ENCODE measurements at regions of chr1 and their contacts with region 1.

Region 1: GRCh38 chr1:15820478-15820877 is 13.0 kb upstream of the UQCRHL start:
- DNase-seq: no peak
- H3K4me3 ChIP-seq: no peak overlapping the region
- H3K4me3 Mint-ChIP-seq: no peak overlapping the region
- H3K27ac ChIP-seq: no peak overlapping the region
- H3K27ac Mint-ChIP-seq: peak overlapping the region in 1 of 7 donors; percentile 37
- H3K4me1 ChIP-seq: peaks cover 8% of the 10 kb centered on the region
- H3K4me1 Mint-ChIP-seq: peaks cover 3 to 5% (median 4%) of the 10 kb centered on the region in 4 donors
- H3K27me3 ChIP-seq: no peaks in the 10 kb centered on the region
- H3K27me3 Mint-ChIP-seq: peaks cover 0 to 3% of the 10 kb centered on the region in 2 donors

Region 2: GRCh38 chr1:15684468-15685291 is 135.8 kb before region 1 on chr1:
- CTCF ChIA-PET with region 1: no interaction called
- POLR2A ChIA-PET with region 1: no interaction called
- intact Hi-C with region 1: no loop called
- DNase-seq: peak; percentile 18 to 60 (median 40)
- H3K4me3 ChIP-seq: peak overlapping the region; percentile 58 to 66
- H3K4me3 Mint-ChIP-seq: peak overlapping the region; percentile 93 to 95 (median 94)
- H3K27ac ChIP-seq: peak overlapping the region; percentile 73
- H3K27ac Mint-ChIP-seq: peak overlapping the region; percentile 94 to 98 (median 94)
- H3K4me1 ChIP-seq: peaks cover 25% of the 10 kb centered on the region
- H3K4me1 Mint-ChIP-seq: peaks cover 20 to 34% (median 28%) of the 10 kb centered on the region in 4 donors
- H3K27me3 ChIP-seq: no peaks in the 10 kb centered on the region
- H3K27me3 Mint-ChIP-seq: no peaks in the 10 kb centered on the region

Region 3: GRCh38 chr1:15847100-15847892 is 26.8 kb after region 1 on chr1 and contains the start of gene SPEN:
- CTCF ChIA-PET with region 1: interaction called, 14 read pairs
- POLR2A ChIA-PET with region 1: interaction called, 15 read pairs
- intact Hi-C with region 1: loop called (anchors 1 kb)
- DNase-seq: peak; percentile 98 to 99 (median 99)
- H3K4me3 ChIP-seq: peak within 1 kb of the TSS; percentile 62 to 65
- H3K4me3 Mint-ChIP-seq: peak within 1 kb of the TSS; percentile 95 to 99 (median 98)
- H3K27ac ChIP-seq: peak within 1 kb of the TSS; percentile 86
- H3K27ac Mint-ChIP-seq: peak within 1 kb of the TSS; percentile 97 to 99 (median 98)
- H3K4me1 ChIP-seq: peaks cover 52% of the 10 kb centered on the region
- H3K4me1 Mint-ChIP-seq: peaks cover 23 to 60% (median 35%) of the 10 kb centered on the region in 4 donors
- H3K27me3 ChIP-seq: no peaks in the 10 kb centered on the region
- H3K27me3 Mint-ChIP-seq: no peaks in the 10 kb centered on the region
- total RNA-seq, gene SPEN: 80.8 to 87.8 TPM

Region 4: DNA sequence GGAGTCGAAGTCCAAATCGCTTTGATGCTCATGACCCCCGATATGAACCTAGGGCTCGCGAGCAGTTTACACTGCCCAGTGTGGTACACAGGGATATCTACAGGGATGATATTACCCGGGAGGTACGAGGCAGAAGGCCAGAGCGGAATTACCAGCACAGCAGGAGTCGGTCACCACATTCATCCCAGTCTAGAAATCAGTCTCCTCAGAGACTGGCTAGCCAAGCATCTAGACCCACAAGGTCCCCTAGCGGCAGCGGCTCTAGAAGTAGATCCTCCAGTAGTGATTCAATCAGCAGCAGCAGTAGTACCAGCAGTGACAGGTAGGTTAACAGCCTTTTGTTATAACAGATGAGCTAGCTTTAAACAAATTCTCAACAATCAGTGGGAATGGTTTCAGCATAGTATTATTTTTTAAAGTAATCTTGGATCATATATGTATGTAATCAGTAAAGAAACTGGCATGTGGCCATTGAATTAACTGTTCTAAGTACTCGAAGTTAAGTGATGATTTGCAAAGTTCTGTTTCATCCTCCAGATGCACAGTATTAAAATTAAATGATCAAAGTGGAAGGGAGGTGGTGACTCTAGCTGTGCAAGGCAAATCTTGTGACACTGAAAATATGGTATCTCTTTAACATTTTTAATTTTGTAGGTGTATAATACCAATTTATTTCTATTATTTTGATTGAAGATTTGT is 56.0 kb after region 1 on chr1:
- CTCF ChIA-PET with region 1: interaction called, 14 read pairs
- POLR2A ChIA-PET with region 1: interaction called, 3 read pairs
- intact Hi-C with region 1: no loop called
- DNase-seq: peak in 1 of 5 donors; percentile 7
- H3K4me3 ChIP-seq: no peak overlapping the region
- H3K4me3 Mint-ChIP-seq: no peak overlapping the region
- H3K27ac ChIP-seq: no peak overlapping the region
- H3K27ac Mint-ChIP-seq: peak overlapping the region in 5 of 7 donors; percentile 22 to 74 (median 46)
- H3K4me1 ChIP-seq: peaks cover 10% of the 10 kb centered on the region
- H3K4me1 Mint-ChIP-seq: peaks cover 35 to 62% (median 45%) of the 10 kb centered on the region in 4 donors
- H3K27me3 ChIP-seq: no peaks in the 10 kb centered on the region
- H3K27me3 Mint-ChIP-seq: no peaks in the 10 kb centered on the region

Region 5: GRCh38 chr1:15918962-15919715 is 98.7 kb after region 1 on chr1:
- CTCF ChIA-PET with region 1: interaction called, 10 read pairs
- POLR2A ChIA-PET with region 1: no interaction called
- intact Hi-C with region 1: loop called (anchors 5 kb)
- DNase-seq: peak in 4 of 5 donors; percentile 17 to 79 (median 26)
- H3K4me3 ChIP-seq: no peak overlapping the region
- H3K4me3 Mint-ChIP-seq: peak overlapping the region in 7 of 8 donors; percentile 0 to 52 (median 12)
- H3K27ac ChIP-seq: no peak overlapping the region
- H3K27ac Mint-ChIP-seq: peak overlapping the region; percentile 23 to 84 (median 58)
- H3K4me1 ChIP-seq: peaks cover 29% of the 10 kb centered on the region
- H3K4me1 Mint-ChIP-seq: peaks cover 16 to 45% (median 33%) of the 10 kb centered on the region in 4 donors
- H3K27me3 ChIP-seq: no peaks in the 10 kb centered on the region
- H3K27me3 Mint-ChIP-seq: no peaks in the 10 kb centered on the region

Region 6: DNA sequence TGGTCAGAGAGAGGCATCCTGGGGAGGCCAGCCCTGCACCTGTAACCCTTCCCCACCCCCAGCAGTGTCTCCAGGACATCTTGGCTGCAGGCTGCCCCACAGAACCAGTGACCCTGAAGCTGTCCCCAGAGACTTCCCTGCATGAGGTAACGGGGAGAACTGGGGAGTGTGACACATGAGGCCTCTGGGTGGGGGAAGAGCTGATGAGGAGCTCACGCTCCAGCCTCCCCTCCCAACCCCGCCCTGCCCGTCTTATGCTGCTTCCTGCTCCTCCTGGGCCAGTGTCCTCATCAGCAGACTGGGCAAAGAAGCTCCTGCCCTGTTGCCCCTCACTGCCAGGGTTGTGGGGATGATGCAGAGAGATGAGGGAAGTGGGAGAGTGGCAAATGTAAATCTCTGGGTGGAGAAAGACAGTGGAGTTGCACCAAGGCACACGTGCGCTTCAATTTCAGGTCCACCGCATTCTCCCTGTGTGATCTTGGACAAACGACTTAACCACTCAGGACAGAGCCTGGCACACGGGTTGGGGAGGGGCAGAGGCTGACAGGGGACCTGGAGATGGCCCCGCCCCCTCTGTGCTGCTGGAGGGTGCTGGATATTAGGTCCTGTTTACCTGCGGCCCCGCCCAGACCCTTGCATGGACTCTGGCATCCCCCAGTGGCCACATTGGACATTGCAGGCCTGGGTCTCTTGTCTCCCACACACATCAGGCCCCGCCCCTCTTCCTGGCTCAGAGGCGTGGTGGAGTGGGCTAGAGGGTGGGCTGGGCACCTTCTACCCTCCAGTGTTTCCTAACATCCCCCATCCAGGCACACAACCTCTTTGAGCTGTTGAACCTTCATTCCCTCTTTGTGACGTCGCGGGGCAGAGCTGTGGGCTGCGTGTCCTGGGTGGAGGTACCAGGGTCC is 235.4 kb after region 1 on chr1:
- CTCF ChIA-PET with region 1: interaction called, 16 read pairs
- POLR2A ChIA-PET with region 1: no interaction called
- intact Hi-C with region 1: no loop called
- DNase-seq: peak; percentile 69 to 85 (median 78)
- H3K4me3 ChIP-seq: no peak overlapping the region
- H3K4me3 Mint-ChIP-seq: peak overlapping the region in 2 of 8 donors; percentile 11 to 43
- H3K27ac ChIP-seq: no peak overlapping the region
- H3K27ac Mint-ChIP-seq: peak overlapping the region in 2 of 7 donors; percentile 52 to 57
- H3K4me1 ChIP-seq: peaks cover 3% of the 10 kb centered on the region
- H3K4me1 Mint-ChIP-seq: peaks cover 4 to 7% (median 6%) of the 10 kb centered on the region in 4 donors
- H3K27me3 ChIP-seq: no peaks in the 10 kb centered on the region
- H3K27me3 Mint-ChIP-seq: peaks cover 2 to 5% of the 10 kb centered on the region in 2 donors

Region 7: GRCh38 chr1:16066245-16066644 is 245.8 kb after region 1 on chr1:
- CTCF ChIA-PET with region 1: no interaction called
- POLR2A ChIA-PET with region 1: no interaction called
- intact Hi-C with region 1: no loop called
- DNase-seq: no peak
- H3K4me3 ChIP-seq: no peak overlapping the region
- H3K4me3 Mint-ChIP-seq: no peak overlapping the region
- H3K27ac ChIP-seq: no peak overlapping the region
- H3K27ac Mint-ChIP-seq: no peak overlapping the region
- H3K4me1 ChIP-seq: peaks cover 30% of the 10 kb centered on the region
- H3K4me1 Mint-ChIP-seq: peaks cover 16 to 42% (median 30%) of the 10 kb centered on the region in 4 donors
- H3K27me3 ChIP-seq: no peaks in the 10 kb centered on the region
- H3K27me3 Mint-ChIP-seq: peaks cover 1 to 4% of the 10 kb centered on the region in 2 donors

Measured in CD4-positive, alpha-beta memory T cell (primary cell).